Activated CD4-positive, alpha-beta T cell treated with anti-CD3 and anti-CD28 coated beads for 36 hours (primary cell): ENCODE measurements at regions of chr10 and their contacts with region 1.

Region 1: DNA sequence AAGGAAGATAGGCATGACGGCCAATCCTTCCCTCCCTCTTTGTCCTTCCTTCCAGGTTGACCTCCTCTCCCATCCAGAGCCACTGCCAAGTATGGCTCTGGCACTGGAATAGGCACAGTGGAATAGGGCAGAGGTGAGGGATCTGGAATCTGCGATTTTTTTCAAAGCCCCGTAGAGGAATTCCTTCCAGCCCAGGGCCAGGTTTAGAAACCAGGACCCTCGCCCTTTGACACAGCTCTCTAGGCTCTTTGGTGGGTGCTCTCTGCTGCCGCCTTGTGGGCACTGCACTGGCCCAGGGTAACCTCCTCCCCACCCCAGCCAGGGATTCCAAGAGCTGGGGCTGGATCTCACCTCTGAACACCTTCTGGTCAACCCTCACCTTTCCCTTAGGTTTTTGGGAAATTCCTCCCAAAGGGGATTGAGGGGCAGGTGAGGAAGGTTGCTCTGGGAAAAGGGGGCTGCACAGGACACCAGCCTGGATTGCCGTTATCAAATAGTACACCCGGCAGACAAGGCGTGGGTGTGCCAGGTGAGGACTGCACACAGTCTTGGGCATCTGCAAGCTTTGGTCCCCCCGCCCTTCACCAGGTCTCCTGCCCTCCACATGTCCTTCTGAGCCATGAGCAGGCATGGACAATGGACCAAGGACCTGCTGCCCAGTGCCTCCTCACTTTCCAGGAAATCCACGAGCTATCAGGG is 22.8 kb downstream of the C10orf105 start:
- DNase-seq: peak; percentile 85
- ATAC-seq: peak; percentile 82
- H3K4me3 Mint-ChIP-seq: no peak overlapping the region
- H3K27ac Mint-ChIP-seq: no peak overlapping the region
- H3K4me1 Mint-ChIP-seq: peaks cover 37% of the 10 kb centered on the region
- H3K27me3 Mint-ChIP-seq: no peaks in the 10 kb centered on the region

Region 2: GRCh38 chr10:71396084-71396720 is 300.6 kb before region 1 on chr10:
- CTCF ChIA-PET with region 1: no interaction called
- POLR2A ChIA-PET with region 1: no interaction called
- intact Hi-C with region 1: loop called in 1 of 2 experiments (anchors 5 kb)
- DNase-seq: peak; percentile 67
- ATAC-seq: peak; percentile 88
- H3K4me3 Mint-ChIP-seq: no peak overlapping the region
- H3K27ac Mint-ChIP-seq: no peak overlapping the region
- H3K4me1 Mint-ChIP-seq: peaks cover 8% of the 10 kb centered on the region
- H3K27me3 Mint-ChIP-seq: peaks cover 51% of the 10 kb centered on the region

Region 3: GRCh38 chr10:71632896-71633600 is 63.7 kb before region 1 on chr10:
- CTCF ChIA-PET with region 1: no interaction called
- POLR2A ChIA-PET with region 1: no interaction called
- intact Hi-C with region 1: no loop called
- DNase-seq: no peak
- ATAC-seq: no peak
- H3K4me3 Mint-ChIP-seq: no peak overlapping the region
- H3K27ac Mint-ChIP-seq: no peak overlapping the region
- H3K4me1 Mint-ChIP-seq: peaks cover 2% of the 10 kb centered on the region
- H3K27me3 Mint-ChIP-seq: no peaks in the 10 kb centered on the region

Region 4: GRCh38 chr10:71713135-71714030 is 16.6 kb after region 1 on chr10:
- CTCF ChIA-PET with region 1: interaction called, 63 read pairs
- POLR2A ChIA-PET with region 1: no interaction called
- intact Hi-C with region 1: no loop called
- DNase-seq: peak; percentile 49
- ATAC-seq: peak; percentile 50
- H3K4me3 Mint-ChIP-seq: peak overlapping the region; percentile 61
- H3K27ac Mint-ChIP-seq: peak overlapping the region; percentile 98
- H3K4me1 Mint-ChIP-seq: peaks cover 46% of the 10 kb centered on the region
- H3K27me3 Mint-ChIP-seq: no peaks in the 10 kb centered on the region